Activated CD8-positive, alpha-beta memory T cell treated with anti-CD3 and anti-CD28 coated beads, Interleukin-2, amount 10 ng/mL, durations not matched to agents 7 days and 5 days (primary cell): ENCODE measurements at regions of chr17 and their contacts with region 1.

Region 1: GRCh38 chr17:8057691-8058114 is 18.8 kb downstream of the ALOX15B start:
- DNase-seq: peak; percentile 71
- ATAC-seq: peak; percentile 79
- H3K4me3 Mint-ChIP-seq: no peak overlapping the region
- H3K27ac Mint-ChIP-seq: no peak overlapping the region
- H3K4me1 Mint-ChIP-seq: peaks cover 28% of the 10 kb centered on the region
- H3K27me3 Mint-ChIP-seq: peaks cover 55% of the 10 kb centered on the region

Region 2: GRCh38 chr17:7862692-7863437 is 194.8 kb before region 1 on chr17:
- CTCF ChIA-PET with region 1: interaction called, 24 read pairs
- DNase-seq: peak; percentile 70
- ATAC-seq: no peak
- H3K4me3 Mint-ChIP-seq: no peak overlapping the region
- H3K27ac Mint-ChIP-seq: no peak overlapping the region
- H3K4me1 Mint-ChIP-seq: peaks cover 11% of the 10 kb centered on the region
- H3K27me3 Mint-ChIP-seq: no peaks in the 10 kb centered on the region

Region 3: DNA sequence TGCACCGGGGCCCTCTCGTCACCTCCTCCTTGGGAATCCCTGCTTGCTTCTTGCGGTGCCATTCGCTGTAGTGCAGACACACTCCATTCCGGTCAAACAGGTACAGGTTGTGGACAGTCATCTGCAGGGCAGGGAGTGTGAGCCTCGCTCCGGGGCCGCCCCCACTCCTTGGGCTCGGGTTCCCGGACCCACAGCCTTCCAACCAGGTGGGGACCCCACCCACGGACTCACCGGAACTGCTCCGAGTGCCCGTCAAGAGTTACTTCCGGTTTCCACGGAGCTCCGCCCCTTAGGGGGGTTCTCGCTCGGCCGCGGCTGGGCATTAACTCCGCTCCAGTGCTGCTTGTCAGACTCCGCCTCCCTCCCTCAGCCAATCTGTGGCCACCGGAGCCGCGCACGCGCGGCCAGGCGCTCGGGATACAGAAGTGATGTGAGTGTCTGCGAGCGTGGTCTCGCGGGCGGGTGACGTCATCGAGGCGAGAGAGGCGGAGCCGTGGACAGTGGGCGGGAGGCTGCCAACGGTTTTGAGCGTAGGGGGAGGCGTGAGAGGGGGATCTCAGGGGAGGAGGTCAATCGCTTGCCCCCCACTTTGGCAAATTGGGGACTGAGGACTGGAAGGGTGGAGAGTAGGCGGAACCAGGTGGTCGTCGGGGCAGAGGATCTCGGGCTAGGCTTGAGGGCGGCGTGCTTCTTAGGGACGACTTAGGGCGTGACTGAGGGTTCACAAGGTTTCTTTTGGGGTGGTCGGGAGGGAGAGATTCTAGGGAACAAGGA is 125.8 kb before region 1 on chr17 and contains the starts of genes CNTROB and TRAPPC1:
- CTCF ChIA-PET with region 1: interaction called, 11 read pairs
- DNase-seq: peak; percentile 100
- ATAC-seq: peak; percentile 97
- H3K4me3 Mint-ChIP-seq: peak within 1 kb of the TSS; percentile 97
- H3K27ac Mint-ChIP-seq: peak within 1 kb of the TSS; percentile 97
- H3K4me1 Mint-ChIP-seq: peaks cover 54% of the 10 kb centered on the region
- H3K27me3 Mint-ChIP-seq: no peaks in the 10 kb centered on the region
- total RNA-seq, gene CNTROB: 56.8 to 69.2 TPM
- total RNA-seq, gene TRAPPC1: 216 to 245 TPM

Region 4: DNA sequence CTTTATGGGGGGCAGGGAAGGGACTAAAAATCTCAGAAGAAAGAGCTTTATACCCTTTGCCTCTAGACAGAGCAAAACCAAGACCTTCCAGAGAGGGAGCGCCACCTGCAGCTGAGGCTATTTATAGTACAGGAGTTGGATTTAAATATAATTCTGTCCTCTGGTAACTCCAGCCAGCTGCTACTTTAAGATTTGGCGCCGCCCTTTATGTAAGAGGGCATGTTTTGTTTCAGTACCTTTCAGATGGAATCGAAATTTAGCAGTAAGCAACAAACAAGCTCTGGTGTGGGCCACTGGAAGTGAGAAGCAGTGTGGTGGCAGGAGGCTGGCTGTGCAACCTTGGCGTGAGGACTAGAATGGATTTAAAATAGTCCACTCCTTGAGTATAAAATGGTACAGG is 60.5 kb before region 1 on chr17:
- CTCF ChIA-PET with region 1: interaction called, 12 read pairs
- DNase-seq: peak; percentile 72
- ATAC-seq: peak; percentile 77
- H3K4me3 Mint-ChIP-seq: no peak overlapping the region
- H3K27ac Mint-ChIP-seq: no peak overlapping the region
- H3K4me1 Mint-ChIP-seq: peaks cover 7% of the 10 kb centered on the region
- H3K27me3 Mint-ChIP-seq: peaks cover 49% of the 10 kb centered on the region

Region 5: GRCh38 chr17:8041249-8041928 is 16.3 kb before region 1 on chr17:
- CTCF ChIA-PET with region 1: interaction called, 64 read pairs
- DNase-seq: peak; percentile 62
- ATAC-seq: peak; percentile 57
- H3K4me3 Mint-ChIP-seq: no peak overlapping the region
- H3K27ac Mint-ChIP-seq: no peak overlapping the region
- H3K4me1 Mint-ChIP-seq: peaks cover 4% of the 10 kb centered on the region
- H3K27me3 Mint-ChIP-seq: peaks cover 34% of the 10 kb centered on the region

Region 6: GRCh38 chr17:8091033-8091687 is 33.5 kb after region 1 on chr17:
- CTCF ChIA-PET with region 1: interaction called, 46 read pairs
- DNase-seq: no peak
- ATAC-seq: no peak
- H3K4me3 Mint-ChIP-seq: no peak overlapping the region
- H3K27ac Mint-ChIP-seq: no peak overlapping the region
- H3K4me1 Mint-ChIP-seq: peaks cover 6% of the 10 kb centered on the region
- H3K27me3 Mint-ChIP-seq: peaks cover 31% of the 10 kb centered on the region

Region 7: DNA sequence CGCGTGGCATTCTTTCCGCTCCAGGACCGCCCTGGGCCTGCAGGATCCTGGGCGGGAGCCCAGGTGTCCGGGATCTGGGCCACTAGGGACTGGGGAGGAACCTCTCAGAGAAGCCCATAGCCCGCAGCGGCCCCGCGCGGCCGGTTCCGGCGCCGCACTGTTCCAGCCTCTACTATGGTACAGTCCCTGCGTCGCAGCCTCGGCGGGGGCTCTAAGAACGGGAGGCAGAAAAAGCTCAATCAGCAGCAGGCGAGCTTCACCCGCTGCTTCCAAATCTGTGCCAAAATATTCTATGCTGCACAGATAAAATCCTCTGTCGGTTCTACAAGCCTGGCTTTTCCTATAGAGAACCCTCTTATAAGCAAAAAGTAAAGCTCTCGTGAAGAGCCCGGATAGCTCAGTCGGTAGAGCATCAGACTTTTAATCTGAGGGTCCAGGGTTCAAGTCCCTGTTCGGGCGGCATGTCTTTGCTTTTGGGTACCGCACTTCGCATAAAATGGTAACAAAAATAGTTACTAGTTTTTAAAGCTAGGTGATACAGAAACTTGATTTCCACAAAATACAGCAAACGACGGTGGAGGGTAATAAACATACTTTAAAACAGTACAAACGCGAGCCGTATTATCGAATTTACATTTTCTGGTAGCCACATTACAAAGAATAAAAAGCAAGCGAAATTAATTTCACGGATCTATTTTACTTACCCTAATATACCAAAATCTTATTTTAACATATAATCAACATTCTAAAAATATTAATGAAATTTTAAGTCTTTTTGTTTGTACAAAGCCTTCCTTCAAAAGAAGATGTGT is 61.3 kb after region 1 on chr17:
- CTCF ChIA-PET with region 1: interaction called, 96 read pairs
- DNase-seq: peak; percentile 92
- ATAC-seq: peak; percentile 69
- H3K4me3 Mint-ChIP-seq: peak overlapping the region; percentile 95
- H3K27ac Mint-ChIP-seq: peak overlapping the region; percentile 88
- H3K4me1 Mint-ChIP-seq: peaks cover 48% of the 10 kb centered on the region
- H3K27me3 Mint-ChIP-seq: peaks cover 59% of the 10 kb centered on the region